ENCODE measurements at regions of chr5 and their contacts with region 1.

Region 1: DNA sequence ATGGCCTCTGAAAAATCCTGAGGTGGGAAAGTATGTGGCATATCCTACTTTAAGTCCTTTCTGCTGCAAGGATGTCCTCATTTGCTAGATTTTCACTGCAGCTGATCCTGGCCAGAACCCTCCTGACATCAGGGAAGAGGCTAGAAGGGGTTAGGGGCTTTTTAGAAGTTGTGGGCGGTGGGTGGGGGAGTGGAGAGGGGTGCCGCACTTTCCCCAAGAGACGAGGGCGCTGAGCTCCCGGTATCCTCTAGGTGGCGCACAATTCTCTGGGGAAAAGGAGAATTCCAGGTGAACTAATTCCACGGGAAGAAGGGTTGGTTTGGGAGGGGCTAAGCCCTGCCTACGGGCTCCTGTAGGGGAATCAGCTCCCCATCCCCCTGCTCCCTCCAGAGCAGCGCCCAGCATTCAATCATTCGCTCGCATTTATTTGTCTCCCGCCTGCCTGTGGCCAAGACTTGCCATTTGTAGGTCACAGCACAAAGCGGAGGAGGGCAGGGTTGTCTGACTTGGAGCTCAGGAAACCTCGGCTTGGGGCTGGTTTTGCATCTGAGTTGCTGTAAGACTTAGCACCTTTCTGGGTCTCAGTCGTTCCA is 42.9 kb upstream of the HAND1 start:
- DNase-seq: no peak
- ATAC-seq: no peak
- H3K4me3 ChIP-seq: no peak overlapping the region
- H3K27ac ChIP-seq: no peak overlapping the region
- H3K4me1 ChIP-seq: peaks cover 13% of the 10 kb centered on the region
- H3K27me3 ChIP-seq: peaks cover 0 to 4% (median 3%) of the 10 kb centered on the region in 3 donors
- CTCF ChIP-seq: peak; percentile 46

Region 2: GRCh38 chr5:154610321-154611154 is 89.6 kb after region 1 on chr5:
- intact Hi-C with region 1: loop called (anchors 5 to 10 kb)
- DNase-seq: peak; percentile 63 to 78
- ATAC-seq: peak; percentile 84 to 95 (median 92)
- H3K4me3 ChIP-seq: peak overlapping the region; percentile 50
- H3K27ac ChIP-seq: no peak overlapping the region
- H3K4me1 ChIP-seq: peaks cover 7% of the 10 kb centered on the region
- H3K27me3 ChIP-seq: peaks cover 0 to 37% (median 20%) of the 10 kb centered on the region in 3 donors
- CTCF ChIP-seq: peak; percentile 73

Measured in psoas muscle (tissue), 8 donors.